ENCODE measurements at regions of chr6 and their contacts with region 1.

Region 1: DNA sequence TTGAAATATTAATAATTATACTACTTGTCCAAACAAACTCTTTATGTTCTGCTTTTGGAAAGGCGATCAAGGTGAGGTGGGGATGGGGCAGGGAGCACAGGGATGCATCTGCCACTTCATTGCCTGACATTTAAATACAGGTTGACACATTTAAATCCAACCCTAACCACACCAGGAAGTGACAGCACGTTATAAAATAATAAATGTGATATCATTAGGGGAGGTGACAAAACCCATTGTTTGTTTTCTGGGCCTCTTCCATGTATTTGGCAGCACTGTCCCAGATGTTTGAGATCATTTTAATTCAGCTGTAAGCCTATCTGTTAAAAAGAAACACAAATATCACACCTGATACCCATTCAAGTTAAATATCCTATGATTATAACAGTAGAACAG is 342.4 kb upstream of the ARID1B start:
- DNase-seq: no peak
- H3K4me3 ChIP-seq: no peak overlapping the region
- H3K27ac ChIP-seq: no peak overlapping the region
- H3K4me1 ChIP-seq: peaks cover 9% of the 10 kb centered on the region
- H3K27me3 ChIP-seq: no peaks in the 10 kb centered on the region
- CTCF ChIP-seq: no peak
- POLR2A ChIP-seq: no peak

Region 2: GRCh38 chr6:157813757-157814455 is 1379.1 kb after region 1 on chr6:
- intact Hi-C with region 1: loop called (anchors 5 kb)
- DNase-seq: no peak
- H3K4me3 ChIP-seq: no peak overlapping the region
- H3K27ac ChIP-seq: peak overlapping the region; percentile 71
- H3K4me1 ChIP-seq: peaks cover 29% of the 10 kb centered on the region
- H3K27me3 ChIP-seq: no peaks in the 10 kb centered on the region
- CTCF ChIP-seq: no peak
- POLR2A ChIP-seq: no peak

Region 3: GRCh38 chr6:158338311-158339112 is 1903.7 kb after region 1 on chr6:
- intact Hi-C with region 1: no loop called
- DNase-seq: no peak
- H3K4me3 ChIP-seq: no peak overlapping the region
- H3K27ac ChIP-seq: no peak overlapping the region
- H3K4me1 ChIP-seq: no peaks in the 10 kb centered on the region
- H3K27me3 ChIP-seq: no peaks in the 10 kb centered on the region
- CTCF ChIP-seq: no peak
- POLR2A ChIP-seq: no peak

Measured in vagina (tissue), 2 donors.